Dendritic cell treated with granulocyte-macrophage colony-stimulating factor and Interleukin-4, amounts not matched to agents 40 ng/mL and 50 ng/mL, for 4 days (primary cell): ENCODE measurements at regions of chr7 and their contacts with region 1.

Region 1: GRCh38 chr7:2019607-2020511 is 212.9 kb downstream of the MAD1L1 start:
- H3K4me3 Mint-ChIP-seq: peak overlapping the region; percentile 61
- H3K27ac Mint-ChIP-seq: peak overlapping the region; percentile 100
- H3K4me1 Mint-ChIP-seq: peaks cover 81% of the 10 kb centered on the region
- H3K27me3 Mint-ChIP-seq: no peaks in the 10 kb centered on the region

Region 2: DNA sequence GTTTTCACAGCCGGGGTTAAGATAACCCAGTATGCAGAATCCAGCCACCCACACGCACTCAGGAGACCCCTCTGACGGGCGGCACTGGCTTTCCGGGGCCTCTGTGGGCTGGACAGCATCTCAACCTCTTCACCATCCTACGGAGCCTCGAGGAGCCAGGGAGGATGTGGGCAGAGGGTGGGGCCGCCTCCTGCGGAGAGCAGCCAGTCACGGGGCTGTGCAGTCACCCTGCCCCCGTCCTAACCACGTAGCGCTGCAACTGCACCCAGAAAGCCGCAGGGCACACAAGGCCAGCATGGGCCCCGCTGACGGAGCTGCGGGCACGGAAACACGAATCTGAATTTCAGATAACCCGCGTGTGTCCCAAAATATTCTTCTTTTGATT is 79.5 kb before region 1 on chr7:
- intact Hi-C with region 1: loop called (anchors 1 kb)
- H3K4me3 Mint-ChIP-seq: peak overlapping the region; percentile 84
- H3K27ac Mint-ChIP-seq: peak overlapping the region; percentile 98
- H3K4me1 Mint-ChIP-seq: peaks cover 76% of the 10 kb centered on the region
- H3K27me3 Mint-ChIP-seq: no peaks in the 10 kb centered on the region

Region 3: GRCh38 chr7:2009541-2010001 is 10.3 kb before region 1 on chr7:
- intact Hi-C with region 1: no loop called
- H3K4me3 Mint-ChIP-seq: no peak overlapping the region
- H3K27ac Mint-ChIP-seq: no peak overlapping the region
- H3K4me1 Mint-ChIP-seq: no peaks in the 10 kb centered on the region
- H3K27me3 Mint-ChIP-seq: no peaks in the 10 kb centered on the region